CD8-positive, alpha-beta T cell (primary cell): ENCODE measurements at regions of chr3 and their contacts with region 1.

Region 1: DNA sequence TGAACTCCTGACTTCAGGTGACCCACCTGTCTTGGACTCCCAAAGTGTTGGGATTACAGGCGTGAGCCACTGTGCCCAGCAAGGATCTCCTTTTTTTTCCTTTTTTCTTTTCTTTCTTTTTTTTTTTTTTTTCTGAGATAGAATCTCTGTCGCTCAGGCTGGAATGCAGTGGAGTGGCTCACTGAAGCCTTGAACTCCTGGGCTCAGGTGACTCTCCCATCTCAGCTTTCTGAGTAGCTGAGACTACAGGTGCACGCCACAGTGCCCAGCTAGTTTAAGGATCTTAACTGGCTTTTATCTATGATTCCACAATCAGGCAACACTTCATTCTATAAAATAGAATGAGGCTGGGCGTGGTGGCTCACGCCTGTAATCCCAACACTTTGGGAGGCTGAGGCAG is 16.3 kb upstream of the NICN1 start:
- DNase-seq: no peak
- ATAC-seq: no peak
- H3K4me3 ChIP-seq: no peak overlapping the region
- H3K4me3 Mint-ChIP-seq: no peak overlapping the region
- H3K27ac ChIP-seq: no peak overlapping the region
- H3K27ac Mint-ChIP-seq: no peak overlapping the region
- H3K4me1 ChIP-seq: peaks cover 13% of the 10 kb centered on the region
- H3K4me1 Mint-ChIP-seq: peaks cover 11% of the 10 kb centered on the region
- H3K27me3 ChIP-seq: no peaks in the 10 kb centered on the region
- H3K27me3 Mint-ChIP-seq: no peaks in the 10 kb centered on the region
- CTCF ChIP-seq: no peak

Region 2: GRCh38 chr3:49358217-49358883 is 87.0 kb before region 1 on chr3 and contains the start of gene GPX1:
- CTCF ChIA-PET with region 1: interaction called, 3 read pairs
- POLR2A ChIA-PET with region 1: no interaction called
- intact Hi-C with region 1: loop called (anchors 5 kb)
- DNase-seq: peak; percentile 45 to 89 (median 78)
- ATAC-seq: peak; percentile 57
- H3K4me3 ChIP-seq: peak within 1 kb of the TSS; percentile 61 to 73
- H3K4me3 Mint-ChIP-seq: peak within 1 kb of the TSS; percentile 91
- H3K27ac ChIP-seq: peak within 1 kb of the TSS; percentile 62 to 81
- H3K27ac Mint-ChIP-seq: peak within 1 kb of the TSS; percentile 96
- H3K4me1 ChIP-seq: peaks cover 26% of the 10 kb centered on the region
- H3K4me1 Mint-ChIP-seq: peaks cover 41% of the 10 kb centered on the region
- H3K27me3 ChIP-seq: no peaks in the 10 kb centered on the region
- H3K27me3 Mint-ChIP-seq: no peaks in the 10 kb centered on the region
- CTCF ChIP-seq: no peak
- total RNA-seq, gene GPX1: 24.4 to 27.8 TPM

Region 3: GRCh38 chr3:49397470-49397869 is 47.9 kb before region 1 on chr3:
- CTCF ChIA-PET with region 1: no interaction called
- POLR2A ChIA-PET with region 1: no interaction called
- intact Hi-C with region 1: no loop called
- DNase-seq: peak in 2 of 9 experiments; percentile 28 to 43
- ATAC-seq: peak; percentile 49
- H3K4me3 ChIP-seq: no peak overlapping the region
- H3K4me3 Mint-ChIP-seq: no peak overlapping the region
- H3K27ac ChIP-seq: no peak overlapping the region
- H3K27ac Mint-ChIP-seq: peak overlapping the region; percentile 23
- H3K4me1 ChIP-seq: peaks cover 37% of the 10 kb centered on the region
- H3K4me1 Mint-ChIP-seq: peaks cover 68% of the 10 kb centered on the region
- H3K27me3 ChIP-seq: no peaks in the 10 kb centered on the region
- H3K27me3 Mint-ChIP-seq: no peaks in the 10 kb centered on the region
- CTCF ChIP-seq: no peak

Region 4: GRCh38 chr3:49428697-49429100 is 16.7 kb before region 1 on chr3:
- CTCF ChIA-PET with region 1: interaction called, 8 read pairs
- POLR2A ChIA-PET with region 1: interaction called, 13 read pairs
- intact Hi-C with region 1: loop called (anchors 1 to 2 kb)
- DNase-seq: no peak
- ATAC-seq: peak; percentile 2
- H3K4me3 ChIP-seq: peak overlapping the region; percentile 63 to 85
- H3K4me3 Mint-ChIP-seq: peak overlapping the region; percentile 89
- H3K27ac ChIP-seq: peak overlapping the region; percentile 70 to 86
- H3K27ac Mint-ChIP-seq: peak overlapping the region; percentile 89
- H3K4me1 ChIP-seq: peaks cover 10% of the 10 kb centered on the region
- H3K4me1 Mint-ChIP-seq: peaks cover 14% of the 10 kb centered on the region
- H3K27me3 ChIP-seq: no peaks in the 10 kb centered on the region
- H3K27me3 Mint-ChIP-seq: no peaks in the 10 kb centered on the region
- CTCF ChIP-seq: no peak